ENCODE measurements at regions of chr19 and their contacts with region 1.

Region 1: DNA sequence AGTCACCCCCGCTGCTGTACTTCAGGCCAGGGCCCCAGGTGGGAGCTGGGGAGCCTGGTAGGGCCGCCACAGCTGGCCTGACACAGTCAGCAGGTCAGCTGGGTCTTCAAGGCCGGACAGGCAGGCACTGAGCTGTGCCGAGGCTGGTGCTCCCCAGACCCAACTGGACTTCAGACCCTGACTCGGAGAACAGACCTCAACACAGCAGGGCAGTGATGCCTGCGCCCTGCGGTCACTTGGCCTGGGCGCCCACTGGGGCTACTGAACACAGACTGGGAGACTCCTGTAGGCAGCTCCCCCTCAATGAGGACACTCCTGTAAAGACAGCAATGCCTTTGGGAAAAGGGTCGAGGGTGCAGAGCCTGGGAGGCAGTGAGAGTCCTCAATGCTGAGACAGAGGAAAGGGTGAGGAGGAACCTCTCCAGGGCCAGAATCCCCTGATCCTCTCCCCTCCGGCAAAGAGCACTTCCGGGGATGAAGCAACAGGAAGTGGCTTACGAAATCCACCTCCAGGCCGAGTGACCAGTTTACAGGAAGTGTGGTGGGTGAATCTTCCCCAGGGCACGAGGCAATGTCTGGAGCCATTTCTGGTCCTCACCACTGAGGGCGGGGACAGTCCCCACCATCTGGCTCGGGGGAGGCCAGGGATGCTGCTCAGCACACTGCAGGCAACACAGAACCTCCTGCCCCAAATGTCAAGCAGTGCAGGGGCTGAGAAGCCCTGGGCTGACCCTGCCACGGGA is 40.8 kb upstream of the ISYNA1 start:
- DNase-seq: peak in 1 of 9 donors; percentile 75
- ATAC-seq: peak; percentile 76
- H3K4me3 ChIP-seq: no peak overlapping the region
- H3K4me3 Mint-ChIP-seq: peak overlapping the region in 8 of 10 donors; percentile 47 to 79 (median 56)
- H3K27ac ChIP-seq: no peak overlapping the region
- H3K27ac Mint-ChIP-seq: peak overlapping the region; percentile 38 to 91 (median 69)
- H3K4me1 ChIP-seq: peaks cover 15 to 63% of the 10 kb centered on the region in 2 donors
- H3K4me1 Mint-ChIP-seq: peaks cover 52 to 80% (median 68%) of the 10 kb centered on the region in 7 donors
- H3K27me3 ChIP-seq: no peaks in the 10 kb centered on the region
- H3K27me3 Mint-ChIP-seq: no peaks in the 10 kb centered on the region

Region 2: GRCh38 chr19:18496167-18496979 is 17.6 kb after region 1 on chr19:
- CTCF ChIA-PET with region 1: no interaction called
- POLR2A ChIA-PET with region 1: interaction called, 5 read pairs
- intact Hi-C with region 1: loop called in 1 of 2 experiments (anchors 2 kb)
- DNase-seq: peak in 7 of 9 donors; percentile 16 to 56 (median 23)
- ATAC-seq: peak; percentile 92
- H3K4me3 ChIP-seq: peak overlapping the region; percentile 32
- H3K4me3 Mint-ChIP-seq: peak overlapping the region; percentile 3 to 74 (median 61)
- H3K27ac ChIP-seq: peak overlapping the region; percentile 14
- H3K27ac Mint-ChIP-seq: peak overlapping the region; percentile 19 to 90 (median 48)
- H3K4me1 ChIP-seq: peaks cover 39 to 89% of the 10 kb centered on the region in 2 donors
- H3K4me1 Mint-ChIP-seq: peaks cover 58 to 78% (median 75%) of the 10 kb centered on the region in 7 donors
- H3K27me3 ChIP-seq: no peaks in the 10 kb centered on the region
- H3K27me3 Mint-ChIP-seq: no peaks in the 10 kb centered on the region